HEK293 (cell line): ENCODE measurements at regions of chr1 and their contacts with region 1.

Region 1: DNA sequence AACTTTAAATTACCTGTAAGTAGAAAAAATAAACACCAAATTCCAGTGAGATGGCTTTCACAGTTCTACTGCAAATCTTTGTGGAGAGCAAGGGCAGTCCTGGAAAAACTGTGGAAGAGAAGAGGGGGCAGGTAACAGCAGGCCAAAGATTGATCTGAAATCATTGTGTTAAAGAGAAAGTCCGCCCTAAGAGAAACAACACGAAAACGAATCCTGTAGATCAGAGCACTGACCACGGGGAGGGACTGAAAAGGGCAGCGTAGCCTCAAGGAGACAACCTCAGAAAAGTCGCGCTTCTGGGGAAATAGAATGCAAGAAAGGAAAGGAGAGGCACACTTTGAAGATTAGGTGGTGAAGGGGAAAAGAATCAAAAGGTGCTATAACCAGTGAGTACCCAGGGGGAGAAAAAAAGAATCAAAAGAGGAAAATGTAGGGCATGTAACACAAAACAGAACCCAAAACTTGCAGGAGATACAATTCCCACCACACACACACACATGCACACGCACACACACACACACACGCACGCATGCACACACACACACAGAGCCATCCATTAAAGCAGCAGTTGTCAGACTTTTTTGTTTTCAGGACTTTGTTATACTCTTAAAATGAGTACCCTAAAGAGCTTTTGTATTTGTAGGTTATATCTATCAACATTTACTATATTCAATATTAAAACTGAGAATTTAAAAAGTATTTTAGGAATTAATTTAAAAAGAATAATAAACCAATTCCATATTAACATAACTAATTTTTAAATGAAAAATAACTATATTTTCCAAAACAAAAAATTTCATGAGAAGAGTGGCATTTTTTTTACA is 28.0 kb upstream of the KLF17 start:
- H3K4me3 ChIP-seq: no peak overlapping the region
- H3K27ac ChIP-seq: no peak overlapping the region
- H3K4me1 ChIP-seq: no peaks in the 10 kb centered on the region
- CTCF ChIP-seq: no peak

Region 2: DNA sequence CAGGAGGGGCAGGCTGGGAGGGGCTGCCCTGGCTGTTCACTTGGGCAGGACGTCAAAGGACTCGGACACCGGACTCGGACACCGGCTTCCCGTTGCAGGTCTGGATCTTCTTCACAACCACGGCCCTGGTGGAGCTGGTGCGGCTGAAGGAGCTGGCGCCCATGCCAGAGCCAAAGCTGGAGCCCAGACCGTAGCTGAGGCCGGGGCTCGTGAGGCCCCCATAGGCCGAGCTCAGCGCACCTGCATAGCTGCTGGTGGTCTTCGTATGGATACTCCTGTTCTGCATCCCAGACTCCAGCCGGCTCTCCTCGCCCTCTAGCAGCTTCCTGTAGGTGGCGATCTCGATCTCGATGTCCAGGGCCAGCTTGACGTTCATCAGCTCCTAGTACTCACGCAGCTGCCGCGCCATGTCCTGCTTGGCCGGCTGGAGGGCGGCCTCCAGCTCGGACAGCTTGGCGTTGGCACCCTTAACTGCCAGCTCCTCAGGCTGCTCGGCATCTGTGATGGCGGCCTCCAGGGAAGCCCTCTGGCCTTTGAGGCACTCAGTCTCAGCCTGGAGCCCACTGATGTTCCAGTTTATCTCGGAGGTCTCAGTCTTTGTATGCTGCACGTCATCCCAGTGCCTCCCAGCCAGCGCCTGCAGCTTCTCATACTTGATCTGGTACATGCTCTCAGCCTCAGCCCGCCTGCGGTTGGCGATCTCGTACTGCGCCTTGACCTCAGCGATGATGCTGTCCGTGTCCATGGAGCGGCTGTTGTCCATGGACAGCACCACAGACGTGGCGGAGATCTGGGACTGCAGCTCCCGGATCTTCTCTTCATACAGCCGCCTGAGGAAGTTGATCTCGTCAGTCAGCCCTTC is 12.9 kb after region 1 on chr1:
- CTCF ChIA-PET with region 1: interaction called, 17 read pairs
- POLR2A ChIA-PET with region 1: no interaction called
- H3K4me3 ChIP-seq: no peak overlapping the region
- H3K27ac ChIP-seq: no peak overlapping the region
- H3K4me1 ChIP-seq: no peaks in the 10 kb centered on the region
- CTCF ChIP-seq: no peak